ENCODE measurements at regions of chr17 and their contacts with region 1.

Region 1: GRCh38 chr17:69567130-69567529 is 152.6 kb downstream of the MAP2K6 start:
- DNase-seq: no peak
- H3K4me3 ChIP-seq: no peak overlapping the region
- H3K27ac ChIP-seq: no peak overlapping the region
- H3K4me1 ChIP-seq: no peaks in the 10 kb centered on the region
- H3K27me3 ChIP-seq: no peaks in the 10 kb centered on the region
- CTCF ChIP-seq: no peak

Region 2: DNA sequence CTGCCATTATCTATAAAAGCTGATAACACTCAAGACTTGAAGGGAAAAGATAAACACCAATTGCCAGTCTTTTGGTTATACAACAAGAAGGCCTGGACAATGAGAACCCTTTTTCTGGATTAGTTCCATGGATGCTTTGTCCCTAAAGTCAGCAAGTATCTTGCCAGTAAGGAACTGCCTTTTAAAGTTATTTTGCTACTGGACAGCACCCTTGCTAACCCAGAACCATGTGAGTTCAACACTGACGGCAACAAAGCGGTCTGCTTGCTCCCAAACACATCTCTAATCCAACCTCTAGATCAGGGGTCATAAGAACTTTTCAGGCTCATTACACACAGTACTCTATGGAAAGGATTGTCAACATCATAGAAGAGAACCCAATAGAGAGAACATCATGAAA is 400.2 kb before region 1 on chr17:
- intact Hi-C with region 1: no loop called
- DNase-seq: no peak
- H3K4me3 ChIP-seq: no peak overlapping the region
- H3K27ac ChIP-seq: no peak overlapping the region
- H3K4me1 ChIP-seq: no peaks in the 10 kb centered on the region
- H3K27me3 ChIP-seq: no peaks in the 10 kb centered on the region
- CTCF ChIP-seq: no peak

Region 3: DNA sequence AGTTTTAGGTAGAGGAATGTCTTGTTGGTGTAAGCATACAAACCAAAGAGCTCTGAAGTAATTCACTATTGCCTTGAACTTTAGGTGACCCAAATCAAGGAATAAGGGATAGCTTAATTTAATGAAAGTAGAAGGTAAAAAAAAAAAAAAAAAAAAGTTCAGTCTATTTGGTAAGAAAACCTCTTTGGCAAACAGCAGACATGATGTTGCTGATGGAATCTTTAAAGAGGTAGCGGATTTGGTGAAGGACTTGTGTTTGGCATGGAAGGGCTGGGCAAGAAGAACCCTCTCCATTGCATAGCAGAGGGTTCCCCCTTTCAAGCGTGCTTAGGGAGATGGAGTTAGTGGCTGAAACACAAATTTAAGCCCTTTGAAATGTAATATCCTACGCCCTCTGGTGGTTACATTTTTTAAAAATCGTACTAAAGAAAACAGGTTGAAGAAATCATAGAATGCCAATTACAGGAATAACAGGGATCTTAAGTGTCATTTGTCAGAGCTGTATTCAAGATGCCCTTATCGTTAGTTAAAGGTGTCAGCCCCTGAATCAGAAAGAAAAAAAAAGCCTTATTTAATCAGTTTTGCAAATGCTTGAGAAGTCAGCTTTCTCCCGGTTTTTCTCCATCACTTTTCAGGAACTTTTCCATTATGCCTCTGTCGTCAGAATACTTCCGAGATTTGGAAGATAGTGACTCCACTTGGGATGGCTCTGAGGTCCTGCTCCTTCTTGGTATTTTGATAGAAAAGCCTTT is 985.3 kb after region 1 on chr17:
- intact Hi-C with region 1: loop called (anchors 10 kb)
- DNase-seq: no peak
- H3K4me3 ChIP-seq: no peak overlapping the region
- H3K27ac ChIP-seq: no peak overlapping the region
- H3K4me1 ChIP-seq: no peaks in the 10 kb centered on the region
- H3K27me3 ChIP-seq: no peaks in the 10 kb centered on the region
- CTCF ChIP-seq: peak; percentile 35

Region 4: DNA sequence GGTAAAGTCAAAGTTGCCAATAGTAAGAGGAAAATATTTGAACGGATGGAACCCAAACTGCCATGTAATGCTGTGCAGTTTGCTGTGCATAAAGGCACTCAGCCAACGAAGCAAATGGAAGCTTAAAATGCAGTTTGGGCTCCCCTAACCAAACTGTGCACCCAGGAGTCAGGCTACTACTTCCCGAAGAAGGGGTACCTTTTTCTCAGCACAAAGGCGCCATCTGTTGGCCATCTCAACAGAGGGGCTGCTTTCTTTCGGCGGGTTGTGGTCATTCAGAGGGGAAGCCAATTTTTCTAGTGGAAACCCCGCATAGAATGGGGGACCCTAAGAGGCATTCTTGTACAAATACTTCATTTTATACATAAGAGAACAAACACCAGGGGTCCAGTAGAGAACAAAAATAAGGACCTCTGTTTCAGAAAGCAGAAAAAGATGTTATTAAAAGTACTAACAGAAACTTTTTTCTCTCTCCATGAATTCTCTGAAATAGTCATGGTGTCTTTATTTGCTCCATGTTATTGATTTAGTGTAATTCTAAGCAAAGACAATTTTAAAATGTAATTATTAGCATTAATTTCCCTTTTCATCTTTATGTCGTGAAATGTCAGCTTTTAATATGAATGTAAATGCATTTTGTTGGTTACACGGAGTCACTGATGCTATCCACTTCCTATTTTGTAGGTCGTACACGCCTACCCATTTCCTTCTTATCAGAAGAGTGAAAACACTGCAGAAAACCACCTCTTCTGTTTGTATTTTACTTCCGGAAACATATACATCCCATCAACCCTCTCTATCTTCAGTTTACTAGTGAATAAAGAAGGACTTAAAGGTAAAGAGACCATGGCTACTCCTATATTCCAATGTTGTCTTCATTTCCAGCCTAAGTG is 1055.5 kb after region 1 on chr17:
- intact Hi-C with region 1: loop called (anchors 5 kb)
- DNase-seq: peak; percentile 63
- H3K4me3 ChIP-seq: no peak overlapping the region
- H3K27ac ChIP-seq: no peak overlapping the region
- H3K4me1 ChIP-seq: no peaks in the 10 kb centered on the region
- H3K27me3 ChIP-seq: no peaks in the 10 kb centered on the region
- CTCF ChIP-seq: peak; percentile 41

Measured in colonic mucosa (tissue), 4 donors.